ENCODE measurements at regions of chrX and their contacts with region 1.

Region 1: DNA sequence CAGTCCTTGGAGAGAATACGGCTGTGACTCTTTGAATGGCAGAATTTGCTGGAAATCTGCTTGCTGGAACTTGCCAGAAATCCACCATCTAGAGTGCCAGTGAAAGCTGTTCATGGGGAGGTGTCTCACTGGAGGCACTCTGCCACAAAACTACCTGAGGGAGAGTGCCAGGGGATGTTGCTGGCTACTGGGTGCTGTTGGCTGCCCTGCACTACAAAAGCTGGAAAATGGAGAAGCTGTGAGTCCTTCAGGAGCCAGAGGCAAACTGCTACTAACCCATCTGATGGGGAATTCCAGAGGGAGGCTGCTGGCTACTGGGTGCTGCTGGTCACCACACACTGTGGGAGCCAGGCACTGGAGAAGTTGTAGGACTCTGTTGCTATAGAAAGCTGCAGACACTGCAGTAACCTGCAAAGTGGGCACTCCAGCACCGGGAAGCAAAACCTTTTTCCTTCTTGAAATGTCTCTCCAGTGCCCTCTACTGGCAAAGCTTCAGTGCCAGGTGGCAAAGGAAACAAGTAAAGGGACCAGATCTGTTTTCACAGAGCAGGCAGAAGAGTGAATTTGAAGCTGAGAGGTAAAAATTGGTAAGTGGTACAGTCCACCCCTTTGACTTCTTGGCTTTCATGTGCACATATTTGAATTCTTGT is 47.8 kb upstream of the HSD17B10 start:
- DNase-seq: no peak
- H3K4me3 ChIP-seq: no peak overlapping the region
- H3K27ac ChIP-seq: no peak overlapping the region
- H3K4me1 ChIP-seq: peaks cover 0 to 16% (median 5%) of the 10 kb centered on the region in 3 donors
- H3K27me3 ChIP-seq: no peaks in the 10 kb centered on the region
- CTCF ChIP-seq: peak in 5 of 6 experiments; percentile 37 to 63 (median 57)
- POLR2A ChIP-seq: no peak

Region 2: DNA sequence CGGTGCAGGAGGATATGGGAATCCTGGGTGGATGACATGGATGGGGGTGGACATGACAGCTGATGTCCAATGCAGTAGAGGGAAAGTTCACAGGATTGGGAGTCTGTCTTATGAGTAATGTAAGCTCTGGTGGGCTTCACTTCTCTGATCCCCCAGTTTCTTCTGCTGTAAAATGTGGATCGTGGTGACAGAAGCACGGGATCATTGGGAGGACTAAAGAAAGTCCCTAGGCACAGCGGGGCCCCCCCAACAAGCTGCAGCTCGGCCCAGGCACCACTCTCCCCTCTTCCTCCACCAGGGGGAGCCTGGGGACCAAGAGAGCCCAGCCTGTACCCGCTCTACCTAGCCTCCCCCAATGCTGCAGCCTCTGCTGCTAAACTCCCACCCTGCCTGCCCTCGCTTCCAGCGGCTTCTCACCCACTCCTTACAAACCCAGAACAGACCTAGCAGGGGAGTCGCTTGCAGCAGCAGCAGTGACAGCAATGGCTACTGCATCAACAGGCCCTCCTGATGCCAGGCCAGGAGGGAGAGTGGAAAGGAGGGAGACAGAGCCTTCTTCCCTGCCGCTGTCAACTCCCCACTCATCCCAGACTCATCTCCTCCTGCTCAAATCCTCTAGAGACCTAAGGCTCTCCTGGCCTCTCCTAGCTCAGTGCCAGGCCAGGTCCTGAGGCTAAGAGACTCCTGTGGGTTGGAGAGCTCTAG is 164.4 kb before region 1 on chrX:
- intact Hi-C with region 1: loop called (anchors 10 kb)
- DNase-seq: no peak
- H3K4me3 ChIP-seq: no peak overlapping the region
- H3K27ac ChIP-seq: no peak overlapping the region
- H3K4me1 ChIP-seq: peaks cover 0 to 33% (median 6%) of the 10 kb centered on the region in 3 donors
- H3K27me3 ChIP-seq: peaks cover 0 to 13% (median 4%) of the 10 kb centered on the region in 4 donors
- CTCF ChIP-seq: peak; percentile 51 to 84 (median 69)
- POLR2A ChIP-seq: no peak

Region 3: GRCh38 chrX:53563324-53563723 is 81.4 kb after region 1 on chrX:
- intact Hi-C with region 1: no loop called
- DNase-seq: no peak
- H3K4me3 ChIP-seq: no peak overlapping the region
- H3K27ac ChIP-seq: no peak overlapping the region
- H3K4me1 ChIP-seq: no peaks in the 10 kb centered on the region
- H3K27me3 ChIP-seq: no peaks in the 10 kb centered on the region
- CTCF ChIP-seq: no peak
- POLR2A ChIP-seq: no peak